B cell (primary cell): ENCODE measurements at regions of chr1 and their contacts with region 1.

Region 1: DNA sequence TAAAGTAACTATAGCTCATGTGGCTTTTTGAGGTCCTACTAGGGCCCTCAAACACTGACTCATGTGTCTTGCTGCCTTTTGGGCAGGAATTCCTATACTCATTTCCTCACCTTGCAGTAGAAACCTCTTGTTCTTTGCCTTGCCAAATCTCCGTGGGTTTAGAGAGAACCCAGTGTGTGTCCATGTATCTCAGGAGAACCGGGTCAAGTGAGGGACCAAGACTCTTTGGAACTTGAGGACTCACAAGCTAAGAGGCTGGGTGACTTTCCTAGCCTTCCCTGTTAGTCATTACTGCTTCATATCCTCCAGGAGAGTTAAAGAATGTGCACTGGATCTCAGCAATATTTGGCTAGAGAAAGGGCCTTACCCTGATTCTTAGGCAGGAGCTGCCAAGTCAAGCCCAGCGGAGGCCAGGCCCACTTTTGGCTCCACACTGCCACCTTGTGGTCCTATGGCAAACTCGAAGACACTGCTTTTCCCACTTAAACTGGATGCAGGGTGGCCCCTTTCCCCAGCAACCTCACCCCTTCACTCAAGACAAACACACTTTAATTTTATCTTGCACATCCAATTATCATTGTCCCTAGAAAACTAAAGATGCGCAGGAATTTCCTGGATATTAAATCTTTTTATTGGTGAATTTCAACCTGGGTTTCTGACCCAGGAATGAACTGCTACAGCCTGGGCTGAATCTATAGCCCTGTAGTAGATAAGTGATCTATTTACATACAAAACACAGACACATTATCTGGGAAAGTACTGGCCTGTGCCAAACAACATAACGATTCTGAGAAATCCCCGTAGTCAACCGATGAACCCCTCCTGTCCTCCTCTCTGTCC is 10.6 kb downstream of the AVPR1B start:
- DNase-seq: peak; percentile 88
- ATAC-seq: peak; percentile 92
- H3K4me3 ChIP-seq: no peak overlapping the region
- H3K4me3 Mint-ChIP-seq: no peak overlapping the region
- H3K27ac ChIP-seq: no peak overlapping the region
- H3K27ac Mint-ChIP-seq: peak overlapping the region; percentile 60
- H3K4me1 ChIP-seq: peaks cover 12% of the 10 kb centered on the region in 2 donors
- H3K4me1 Mint-ChIP-seq: peaks cover 28% of the 10 kb centered on the region
- H3K27me3 ChIP-seq: no peaks in the 10 kb centered on the region
- H3K27me3 Mint-ChIP-seq: no peaks in the 10 kb centered on the region
- CTCF ChIP-seq: peak; percentile 94

Region 2: GRCh38 chr1:205791568-205792180 is 314.9 kb before region 1 on chr1:
- CTCF ChIA-PET with region 1: interaction called, 35 read pairs
- POLR2A ChIA-PET with region 1: no interaction called
- intact Hi-C with region 1: loop called (anchors 1 kb)
- DNase-seq: peak; percentile 74
- ATAC-seq: peak; percentile 82
- H3K4me3 ChIP-seq: no peak overlapping the region
- H3K4me3 Mint-ChIP-seq: no peak overlapping the region
- H3K27ac ChIP-seq: no peak overlapping the region
- H3K27ac Mint-ChIP-seq: peak overlapping the region; percentile 42
- H3K4me1 ChIP-seq: peaks cover 5 to 27% of the 10 kb centered on the region in 2 donors
- H3K4me1 Mint-ChIP-seq: peaks cover 27% of the 10 kb centered on the region
- H3K27me3 ChIP-seq: no peaks in the 10 kb centered on the region
- H3K27me3 Mint-ChIP-seq: no peaks in the 10 kb centered on the region
- CTCF ChIP-seq: peak; percentile 82

Region 3: DNA sequence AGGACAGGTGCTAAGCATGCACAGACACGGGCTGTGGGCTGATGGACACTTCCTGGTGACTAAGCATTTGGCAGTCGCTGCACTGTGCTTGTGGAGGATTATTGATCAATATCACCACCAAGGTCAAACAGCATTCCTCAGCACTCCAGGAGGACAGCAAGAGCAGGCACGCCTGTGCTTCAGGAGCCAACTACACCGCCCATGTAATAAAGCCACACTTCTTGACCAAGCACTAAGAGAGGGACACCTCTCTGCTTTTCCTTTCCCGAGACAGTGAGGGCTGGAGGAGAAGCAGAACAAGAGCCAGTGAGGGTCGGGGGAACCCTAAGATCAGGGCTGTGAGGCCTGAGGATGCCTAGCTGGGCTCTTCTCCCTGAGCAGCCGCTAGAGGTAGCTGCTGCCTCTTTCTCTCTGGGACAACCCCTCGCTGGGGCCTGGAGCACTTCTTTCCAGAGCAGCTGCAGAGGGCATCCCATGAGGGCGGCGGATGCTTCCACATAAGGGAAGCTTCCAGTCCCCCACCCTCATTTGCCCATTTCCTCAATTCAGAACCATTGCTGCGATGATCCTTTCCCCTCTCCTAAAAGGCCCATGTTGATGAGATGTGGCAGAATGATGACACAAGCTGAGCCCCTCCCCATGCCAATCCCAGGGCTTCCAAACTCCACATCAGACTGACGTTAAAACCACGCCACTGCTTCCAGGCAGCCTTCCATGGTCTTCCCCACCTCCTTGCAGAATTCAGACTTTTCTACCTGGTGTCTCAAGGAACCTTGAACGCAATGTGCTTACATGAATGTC is 122.4 kb before region 1 on chr1:
- CTCF ChIA-PET with region 1: interaction called, 235 read pairs
- POLR2A ChIA-PET with region 1: no interaction called
- intact Hi-C with region 1: loop called (anchors 1 kb)
- DNase-seq: peak; percentile 62
- ATAC-seq: peak; percentile 80
- H3K4me3 ChIP-seq: no peak overlapping the region
- H3K4me3 Mint-ChIP-seq: no peak overlapping the region
- H3K27ac ChIP-seq: no peak overlapping the region
- H3K27ac Mint-ChIP-seq: no peak overlapping the region
- H3K4me1 ChIP-seq: no peaks in the 10 kb centered on the region
- H3K4me1 Mint-ChIP-seq: no peaks in the 10 kb centered on the region
- H3K27me3 ChIP-seq: no peaks in the 10 kb centered on the region
- H3K27me3 Mint-ChIP-seq: no peaks in the 10 kb centered on the region
- CTCF ChIP-seq: peak; percentile 67

Region 4: GRCh38 chr1:206012086-206012859 is 94.3 kb before region 1 on chr1:
- CTCF ChIA-PET with region 1: interaction called, 5 read pairs
- POLR2A ChIA-PET with region 1: no interaction called
- intact Hi-C with region 1: loop called (anchors 1 kb)
- DNase-seq: peak; percentile 93
- ATAC-seq: peak; percentile 99
- H3K4me3 ChIP-seq: peak overlapping the region in 4 of 5 experiments; percentile 23 to 55 (median 44)
- H3K4me3 Mint-ChIP-seq: peak overlapping the region; percentile 81
- H3K27ac ChIP-seq: peak overlapping the region; percentile 77 to 87
- H3K27ac Mint-ChIP-seq: peak overlapping the region; percentile 95
- H3K4me1 ChIP-seq: peaks cover 21 to 24% of the 10 kb centered on the region in 2 donors
- H3K4me1 Mint-ChIP-seq: peaks cover 32% of the 10 kb centered on the region
- H3K27me3 ChIP-seq: no peaks in the 10 kb centered on the region
- H3K27me3 Mint-ChIP-seq: no peaks in the 10 kb centered on the region
- CTCF ChIP-seq: peak; percentile 25

Region 5: GRCh38 chr1:206050655-206051235 is 55.8 kb before region 1 on chr1:
- CTCF ChIA-PET with region 1: interaction called, 39 read pairs
- POLR2A ChIA-PET with region 1: interaction called, 4 read pairs
- intact Hi-C with region 1: no loop called
- DNase-seq: peak; percentile 96
- ATAC-seq: peak; percentile 93
- H3K4me3 ChIP-seq: peak overlapping the region in 1 of 5 experiments; percentile 42
- H3K4me3 Mint-ChIP-seq: peak overlapping the region; percentile 91
- H3K27ac ChIP-seq: peak overlapping the region; percentile 91 to 93
- H3K27ac Mint-ChIP-seq: peak overlapping the region; percentile 99
- H3K4me1 ChIP-seq: peaks cover 71 to 80% of the 10 kb centered on the region in 2 donors
- H3K4me1 Mint-ChIP-seq: peaks cover 89% of the 10 kb centered on the region
- H3K27me3 ChIP-seq: no peaks in the 10 kb centered on the region
- H3K27me3 Mint-ChIP-seq: no peaks in the 10 kb centered on the region
- CTCF ChIP-seq: peak; percentile 57

Region 6: DNA sequence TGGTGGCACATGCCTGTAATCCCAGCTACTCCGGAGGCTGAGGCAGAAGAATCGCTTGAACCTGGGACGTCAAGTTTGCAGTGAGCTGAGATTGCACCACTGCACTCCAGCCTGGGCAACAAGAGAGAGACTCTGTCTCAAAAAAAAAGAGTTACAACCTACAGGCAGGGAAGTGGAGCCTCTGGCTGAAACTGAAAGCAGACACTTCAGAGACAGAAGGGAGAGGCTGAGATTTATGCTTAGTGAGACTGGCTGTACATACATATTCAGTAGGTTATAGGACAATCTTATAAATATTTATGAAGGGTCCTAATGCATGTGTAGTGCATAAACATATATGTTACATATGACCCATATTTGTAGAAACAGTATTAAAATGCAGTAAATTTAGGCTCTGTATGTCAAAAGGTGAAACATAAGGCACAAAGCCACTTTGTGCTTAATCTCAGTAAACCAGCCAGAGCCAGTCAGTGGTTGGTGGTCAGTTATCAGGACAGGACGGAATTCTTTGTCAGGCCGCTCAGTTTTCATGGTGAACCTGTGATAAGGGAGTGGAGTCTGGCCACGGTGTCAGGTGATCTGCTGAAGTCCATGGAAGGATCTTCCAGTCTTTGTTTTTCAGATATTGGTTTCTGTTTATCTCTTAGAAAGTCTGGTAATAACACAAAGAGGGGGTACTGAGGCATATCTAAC is 39.9 kb before region 1 on chr1:
- CTCF ChIA-PET with region 1: interaction called, 16 read pairs
- POLR2A ChIA-PET with region 1: no interaction called
- intact Hi-C with region 1: loop called (anchors 5 kb)
- DNase-seq: peak; percentile 72
- ATAC-seq: peak; percentile 78
- H3K4me3 ChIP-seq: no peak overlapping the region
- H3K4me3 Mint-ChIP-seq: peak overlapping the region; percentile 75
- H3K27ac ChIP-seq: peak overlapping the region; percentile 63 to 75
- H3K27ac Mint-ChIP-seq: peak overlapping the region; percentile 88
- H3K4me1 ChIP-seq: peaks cover 35 to 43% of the 10 kb centered on the region in 2 donors
- H3K4me1 Mint-ChIP-seq: peaks cover 49% of the 10 kb centered on the region
- H3K27me3 ChIP-seq: no peaks in the 10 kb centered on the region
- H3K27me3 Mint-ChIP-seq: no peaks in the 10 kb centered on the region
- CTCF ChIP-seq: no peak

Region 7: DNA sequence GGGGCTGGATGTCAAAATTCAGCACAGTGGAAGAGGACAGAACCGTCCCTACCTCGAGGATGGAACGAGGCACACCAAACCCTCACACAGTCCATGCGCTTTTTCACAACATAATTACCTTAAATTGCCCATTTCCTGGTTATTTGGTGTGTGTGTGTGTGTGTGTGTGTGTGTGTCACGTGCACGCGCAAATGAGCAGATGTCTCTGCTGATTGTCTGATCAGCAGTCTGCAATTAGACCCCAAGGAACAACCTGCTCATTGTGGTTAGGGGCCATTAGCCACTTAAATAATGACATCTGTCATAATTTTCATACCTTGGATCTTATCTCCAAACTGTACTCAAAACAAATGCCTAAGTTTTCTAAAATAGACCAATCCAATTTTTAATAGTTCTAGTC is 12.5 kb before region 1 on chr1:
- CTCF ChIA-PET with region 1: interaction called, 31 read pairs
- POLR2A ChIA-PET with region 1: no interaction called
- intact Hi-C with region 1: no loop called
- DNase-seq: no peak
- ATAC-seq: no peak
- H3K4me3 ChIP-seq: no peak overlapping the region
- H3K4me3 Mint-ChIP-seq: no peak overlapping the region
- H3K27ac ChIP-seq: no peak overlapping the region
- H3K27ac Mint-ChIP-seq: no peak overlapping the region
- H3K4me1 ChIP-seq: peaks cover 0 to 5% of the 10 kb centered on the region in 2 donors
- H3K4me1 Mint-ChIP-seq: peaks cover 4% of the 10 kb centered on the region
- H3K27me3 ChIP-seq: no peaks in the 10 kb centered on the region
- H3K27me3 Mint-ChIP-seq: no peaks in the 10 kb centered on the region
- CTCF ChIP-seq: no peak